ENCODE measurements at regions of chr4 and their contacts with region 1.

Region 1: GRCh38 chr4:35399912-35400311 is 844.4 kb downstream of the ARAP2 start:
- DNase-seq: no peak
- H3K4me3 ChIP-seq: no peak overlapping the region
- H3K27ac ChIP-seq: no peak overlapping the region
- H3K4me1 ChIP-seq: no peaks in the 10 kb centered on the region
- H3K27me3 ChIP-seq: no peaks in the 10 kb centered on the region
- CTCF ChIP-seq: no peak
- EP300 ChIP-seq: no peak
- POLR2A ChIP-seq: no peak

Region 2: DNA sequence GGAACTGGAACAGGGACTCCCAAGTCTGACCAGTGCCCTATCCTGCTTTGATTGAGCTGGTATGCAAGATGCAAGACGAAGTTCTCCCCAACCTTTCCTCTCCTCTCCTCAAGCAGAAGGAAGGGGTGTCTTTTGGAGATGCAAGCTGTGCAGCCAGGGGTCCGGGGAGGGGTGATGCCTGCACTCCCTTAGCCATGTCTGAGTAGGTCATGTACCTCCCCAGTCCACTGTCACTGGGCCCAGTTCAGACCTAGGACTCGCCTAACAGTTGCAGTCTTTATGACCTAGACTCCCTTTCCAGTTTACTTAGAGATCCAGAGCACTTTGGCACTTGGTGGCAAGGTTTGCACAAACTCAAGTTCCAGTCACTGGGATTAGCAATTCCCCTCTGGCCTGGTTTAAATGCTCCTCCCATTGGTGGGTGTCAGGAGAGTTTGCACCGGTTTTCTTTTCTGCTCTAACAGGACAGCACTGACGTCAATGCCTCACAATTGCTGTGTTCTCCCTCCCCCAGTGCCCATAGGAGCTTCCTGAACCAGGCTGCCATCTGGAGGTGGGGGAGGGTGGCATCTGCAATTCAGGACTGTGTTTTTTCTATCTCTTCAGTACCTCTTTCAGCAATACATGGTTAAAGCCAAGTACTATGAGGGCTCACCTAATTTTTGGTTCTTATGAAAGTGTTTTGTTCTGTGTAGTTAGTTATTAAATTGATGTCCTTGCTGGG is 62.2 kb after region 1 on chr4:
- in situ Hi-C with region 1: no loop called
- intact Hi-C with region 1: loop called (anchors 2 kb)
- DNase-seq: no peak
- H3K4me3 ChIP-seq: no peak overlapping the region
- H3K27ac ChIP-seq: no peak overlapping the region
- H3K4me1 ChIP-seq: no peaks in the 10 kb centered on the region
- H3K27me3 ChIP-seq: no peaks in the 10 kb centered on the region
- CTCF ChIP-seq: no peak
- EP300 ChIP-seq: no peak
- POLR2A ChIP-seq: no peak

Measured in transverse colon (tissue), 4 donors.